ENCODE measurements at regions of chr10 and their contacts with region 1.

Region 1: GRCh38 chr10:37976091-37976879 is at the start of gene ZNF25:
- DNase-seq: peak; percentile 97
- H3K4me3 ChIP-seq: peak within 1 kb of the TSS; percentile 83
- H3K27ac ChIP-seq: peak within 1 kb of the TSS; percentile 48
- H3K27me3 ChIP-seq: no peaks in the 10 kb centered on the region
- CTCF ChIP-seq: peak; percentile 94
- polyA plus RNA-seq, gene ZNF25: 8.2 and 10.9 TPM in 2 replicates

Region 2: DNA sequence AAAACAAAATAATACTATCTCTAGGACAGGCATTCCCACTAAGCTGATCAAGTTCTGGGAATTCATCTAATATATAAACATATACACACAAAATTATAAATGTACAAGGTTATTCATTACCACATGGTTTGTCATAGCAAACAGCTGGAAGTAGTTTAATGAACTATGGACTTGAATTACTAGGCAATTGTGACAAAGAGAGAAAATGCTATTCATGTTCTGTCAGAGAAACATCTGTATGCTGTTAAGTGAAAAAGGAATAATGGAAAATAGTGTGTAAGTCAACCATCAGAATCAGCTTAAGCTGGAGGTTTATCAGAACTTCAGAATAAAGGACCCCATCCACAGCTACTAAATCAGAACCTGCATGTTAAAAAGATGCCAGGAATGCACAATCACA is 121.7 kb before region 1 on chr10:
- CTCF ChIA-PET with region 1: interaction called, 10 read pairs
- POLR2A ChIA-PET with region 1: interaction called, 7 read pairs
- DNase-seq: no peak
- H3K4me3 ChIP-seq: no peak overlapping the region
- H3K27ac ChIP-seq: no peak overlapping the region
- H3K27me3 ChIP-seq: no peaks in the 10 kb centered on the region
- CTCF ChIP-seq: no peak

Region 3: GRCh38 chr10:37960591-37961137 is 15.6 kb before region 1 on chr10:
- CTCF ChIA-PET with region 1: interaction called, 14 read pairs
- POLR2A ChIA-PET with region 1: no interaction called
- DNase-seq: no peak
- H3K4me3 ChIP-seq: no peak overlapping the region
- H3K27ac ChIP-seq: no peak overlapping the region
- H3K27me3 ChIP-seq: no peaks in the 10 kb centered on the region
- CTCF ChIP-seq: no peak

Region 4: DNA sequence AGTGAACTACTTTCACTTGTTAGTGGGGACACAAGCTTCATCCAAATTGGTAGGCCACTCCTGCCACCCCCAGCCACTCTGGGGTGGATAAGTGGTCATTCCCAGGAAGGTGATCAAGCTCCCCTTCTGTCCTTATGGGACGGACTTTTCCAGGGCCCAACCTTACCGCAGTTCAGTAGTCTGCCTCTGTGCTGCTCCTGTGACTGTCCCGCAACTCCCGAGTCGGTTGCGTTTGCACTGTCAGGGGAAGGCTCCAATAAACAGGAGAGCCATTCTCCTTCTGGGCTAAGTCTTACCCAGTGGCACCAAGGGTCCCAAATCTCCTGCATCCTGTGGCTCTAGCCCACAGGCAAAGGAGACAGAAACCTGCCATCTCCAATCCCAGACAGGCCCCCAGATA is 26.7 kb after region 1 on chr10:
- CTCF ChIA-PET with region 1: interaction called, 12 read pairs
- POLR2A ChIA-PET with region 1: no interaction called
- DNase-seq: no peak
- H3K4me3 ChIP-seq: no peak overlapping the region
- H3K27ac ChIP-seq: no peak overlapping the region
- H3K27me3 ChIP-seq: no peaks in the 10 kb centered on the region
- CTCF ChIP-seq: no peak

Region 5: DNA sequence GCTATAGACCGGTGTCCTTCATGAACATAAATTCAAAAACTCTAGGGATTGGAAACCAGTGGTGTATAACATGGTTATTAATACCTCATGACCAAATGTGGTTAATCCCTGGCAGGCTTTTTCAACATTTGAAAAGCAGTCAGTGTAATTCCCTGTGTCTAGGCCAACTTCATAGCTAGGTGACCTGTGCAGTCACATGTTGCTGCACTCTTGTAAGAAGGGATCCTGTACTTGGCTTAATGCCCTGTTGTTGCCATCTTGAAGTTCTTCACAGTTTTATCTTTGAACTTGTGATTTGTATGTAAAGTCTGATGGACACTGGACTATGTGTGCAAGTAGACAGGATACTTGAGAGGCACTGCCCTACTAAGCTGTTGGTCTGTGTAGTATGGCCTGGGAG is 73.9 kb after region 1 on chr10:
- CTCF ChIA-PET with region 1: interaction called, 12 read pairs
- POLR2A ChIA-PET with region 1: no interaction called
- DNase-seq: no peak
- H3K4me3 ChIP-seq: no peak overlapping the region
- H3K27ac ChIP-seq: no peak overlapping the region
- H3K27me3 ChIP-seq: no peaks in the 10 kb centered on the region
- CTCF ChIP-seq: no peak